ENCODE measurements at regions of chr1 and their contacts with region 1.

Region 1: DNA sequence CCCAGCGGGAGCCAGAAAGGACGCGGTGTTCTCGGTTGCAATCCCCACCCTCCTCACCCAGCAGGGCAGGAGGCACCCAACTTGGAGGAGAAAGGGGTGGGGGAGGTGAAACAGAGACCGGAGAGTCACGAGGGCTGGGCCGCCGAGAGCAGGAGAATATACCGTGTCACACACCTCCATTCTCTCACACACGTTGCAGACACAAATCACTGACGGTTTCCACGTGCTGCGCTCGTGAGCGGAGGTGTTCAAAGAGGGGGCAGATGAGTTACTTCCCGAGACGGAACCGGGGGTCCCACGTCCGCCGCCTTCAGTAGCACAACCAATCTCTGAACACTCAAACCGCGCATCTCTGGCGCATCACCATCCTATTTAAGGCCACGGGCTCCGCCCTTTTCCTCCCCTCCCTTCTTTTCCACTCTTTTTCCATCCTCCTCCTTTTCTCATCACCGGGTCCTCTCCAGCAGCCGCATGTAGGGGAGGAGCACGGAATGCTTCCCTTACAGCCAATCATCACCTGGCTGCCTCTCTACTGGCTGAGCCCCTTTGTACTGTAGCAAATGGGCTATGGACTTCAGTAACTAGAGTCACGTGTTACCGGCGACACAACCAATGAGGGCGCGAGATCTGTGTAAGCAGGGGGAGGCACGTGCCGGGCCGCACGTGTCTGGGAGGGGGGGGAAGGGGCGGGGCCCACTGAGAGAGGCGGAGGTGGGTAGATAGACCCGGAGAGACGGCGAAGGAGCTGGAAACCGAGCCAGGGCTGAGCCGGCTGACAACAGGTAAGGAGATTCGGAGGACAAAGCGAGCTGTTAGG is at the start of gene CIART:
- DNase-seq: peak; percentile 97 to 99
- ATAC-seq: peak; percentile 88 to 91
- H3K4me3 ChIP-seq: peak within 1 kb of the TSS; percentile 59 to 80 (median 72)
- H3K27ac ChIP-seq: peak within 1 kb of the TSS; percentile 93 to 97 (median 95)
- H3K4me1 ChIP-seq: peaks cover 27 to 34% of the 10 kb centered on the region in 2 donors
- H3K27me3 ChIP-seq: no peaks in the 10 kb centered on the region
- CTCF ChIP-seq: no peak
- POLR2A ChIP-seq: peak; percentile 67 to 77
- total RNA-seq, gene CIART: 8.2 to 15.8 (median 11.7) TPM

Region 2: DNA sequence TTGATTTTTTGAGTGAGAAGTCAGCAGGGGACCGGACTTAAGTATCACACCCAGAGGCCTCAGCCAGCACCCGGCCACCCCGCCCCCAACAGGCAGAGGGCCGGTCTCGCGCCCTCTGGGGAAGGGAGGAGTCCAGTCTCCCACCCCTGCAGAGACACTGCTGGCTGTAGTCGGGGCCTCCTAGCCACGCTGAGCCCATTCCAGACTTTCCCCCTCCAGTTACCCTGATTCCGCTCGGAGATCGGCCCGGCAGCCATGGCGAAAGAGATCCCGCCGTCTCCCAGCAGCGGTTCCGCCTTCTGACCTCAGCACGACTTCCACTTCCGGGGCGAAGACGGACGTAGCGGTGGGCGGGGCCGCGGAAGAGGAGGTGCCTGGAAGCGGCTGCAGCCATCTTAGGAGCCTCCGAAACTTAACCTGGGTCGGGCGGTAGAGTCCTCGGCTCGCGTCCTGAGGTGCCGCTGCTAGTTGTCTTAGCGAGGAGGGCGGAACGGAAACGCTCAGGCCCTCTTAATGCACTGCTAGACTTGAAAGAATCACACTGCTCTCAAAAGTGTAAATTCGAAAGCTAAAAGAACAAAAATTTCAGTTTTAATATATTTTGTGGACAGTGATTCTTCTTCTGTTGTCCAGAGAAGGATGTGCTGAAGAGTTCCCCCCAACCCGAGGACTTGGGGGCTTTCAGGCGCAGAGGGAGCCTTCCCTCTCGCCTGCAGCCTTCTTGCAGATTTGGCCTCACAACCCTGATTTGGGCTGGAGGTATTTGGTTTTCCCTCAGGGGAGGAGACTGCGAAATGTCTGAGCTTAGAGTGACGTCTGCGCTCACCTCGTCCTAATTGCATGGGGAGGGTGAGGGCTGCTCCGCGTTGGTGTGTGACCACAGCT is 354.3 kb before region 1 on chr1 and contains the start of gene SF3B4:
- in situ Hi-C with region 1: no loop called
- intact Hi-C with region 1: no loop called
- DNase-seq: peak; percentile 95
- ATAC-seq: peak; percentile 98 to 99
- H3K4me3 ChIP-seq: peak within 1 kb of the TSS; percentile 73 to 98 (median 92)
- H3K27ac ChIP-seq: peak within 1 kb of the TSS; percentile 92 to 98 (median 94)
- H3K4me1 ChIP-seq: peaks cover 29 to 33% of the 10 kb centered on the region in 2 donors
- H3K27me3 ChIP-seq: no peaks in the 10 kb centered on the region
- CTCF ChIP-seq: peak in 3 of 5 experiments; percentile 15 to 39 (median 31)
- POLR2A ChIP-seq: peak; percentile 81 to 89
- total RNA-seq, gene SF3B4: 4.4 to 17.4 (median 8.1) TPM

Region 3: GRCh38 chr1:150213170-150214098 is 68.6 kb before region 1 on chr1:
- in situ Hi-C with region 1: no loop called
- intact Hi-C with region 1: loop called (anchors 1 kb)
- DNase-seq: peak; percentile 93 to 97
- ATAC-seq: peak; percentile 99 to 100
- H3K4me3 ChIP-seq: peak overlapping the region; percentile 59 to 68 (median 67)
- H3K27ac ChIP-seq: peak overlapping the region; percentile 75 to 88 (median 86)
- H3K4me1 ChIP-seq: peaks cover 5 to 10% of the 10 kb centered on the region in 2 donors
- H3K27me3 ChIP-seq: no peaks in the 10 kb centered on the region
- CTCF ChIP-seq: peak in 2 of 5 experiments; percentile 13 to 26
- POLR2A ChIP-seq: peak; percentile 18 to 49

Region 4: GRCh38 chr1:150259758-150260669 is 22.0 kb before region 1 on chr1:
- in situ Hi-C with region 1: no loop called
- intact Hi-C with region 1: loop called (anchors 1 kb)
- DNase-seq: peak in 1 of 2 donors; percentile 24
- ATAC-seq: peak in 1 of 2 donors; percentile 5
- H3K4me3 ChIP-seq: peak overlapping the region in 1 of 4 donors; percentile 5
- H3K27ac ChIP-seq: peak overlapping the region; percentile 22 to 76 (median 66)
- H3K4me1 ChIP-seq: peaks cover 32 to 48% of the 10 kb centered on the region in 2 donors
- H3K27me3 ChIP-seq: no peaks in the 10 kb centered on the region
- CTCF ChIP-seq: no peak
- POLR2A ChIP-seq: no peak

Region 5: DNA sequence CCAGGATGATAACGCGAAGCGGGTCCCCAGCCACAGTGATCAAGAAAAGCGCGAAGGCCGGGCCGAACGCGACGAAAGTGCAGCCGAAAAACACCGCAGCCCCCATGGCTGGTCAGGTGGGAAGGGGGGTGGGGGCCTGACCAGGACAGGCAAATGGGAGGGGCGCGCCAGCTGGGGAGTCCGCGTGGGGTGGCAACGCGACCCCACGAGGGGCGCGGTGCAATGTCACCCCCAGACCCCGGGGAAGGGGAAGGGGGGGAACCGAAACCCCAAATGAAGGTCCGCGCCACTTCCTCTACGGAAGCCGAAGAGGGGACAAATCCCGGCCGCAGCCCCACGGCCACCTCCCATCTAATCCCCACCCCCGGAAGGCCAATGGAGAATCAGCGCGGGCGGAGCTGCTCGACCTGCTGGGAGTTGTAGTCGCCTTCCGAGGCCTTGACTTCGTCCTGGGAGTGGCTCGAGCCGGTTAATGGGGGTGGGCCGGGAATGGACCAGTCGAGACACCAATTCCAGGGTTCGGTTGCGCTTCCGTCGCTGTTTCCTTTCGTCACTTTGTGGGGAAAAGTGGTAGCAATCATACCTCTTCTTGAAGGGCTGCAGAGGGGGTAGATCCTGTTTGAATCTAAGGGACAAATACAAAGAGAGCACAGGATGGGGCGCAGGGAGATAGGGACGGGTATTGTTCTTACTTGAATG is 13.2 kb before region 1 on chr1 and contains the start of gene APH1A:
- in situ Hi-C with region 1: no loop called
- intact Hi-C with region 1: loop called (anchors 1 kb)
- DNase-seq: peak; percentile 97 to 98
- ATAC-seq: peak; percentile 95 to 96
- H3K4me3 ChIP-seq: peak within 1 kb of the TSS; percentile 69 to 99 (median 94)
- H3K27ac ChIP-seq: peak within 1 kb of the TSS; percentile 94 to 99 (median 98)
- H3K4me1 ChIP-seq: peaks cover 10 to 40% of the 10 kb centered on the region in 2 donors
- H3K27me3 ChIP-seq: no peaks in the 10 kb centered on the region
- CTCF ChIP-seq: no peak
- POLR2A ChIP-seq: peak; percentile 76 to 83
- total RNA-seq, gene APH1A: 41.2 to 63.8 (median 54.9) TPM

Region 6: DNA sequence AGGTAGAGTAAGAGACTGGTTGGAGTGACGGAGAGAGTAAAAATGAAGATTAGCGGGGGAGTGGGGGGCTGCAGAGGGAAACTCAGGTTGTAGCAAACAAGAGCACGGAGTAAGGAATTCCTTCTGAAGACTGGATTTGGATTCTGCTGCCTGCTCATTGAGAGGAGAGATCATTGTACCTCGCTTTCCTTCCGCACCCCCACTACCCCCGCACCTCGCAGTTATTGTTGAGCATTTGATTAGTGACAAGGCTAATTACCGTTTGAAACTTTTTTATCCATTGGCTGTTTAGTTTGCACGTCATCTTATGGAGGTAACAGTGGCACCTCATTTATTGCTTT is 39.8 kb after region 1 on chr1:
- in situ Hi-C with region 1: no loop called
- intact Hi-C with region 1: loop called (anchors 1 kb)
- DNase-seq: no peak
- ATAC-seq: no peak
- H3K4me3 ChIP-seq: peak overlapping the region; percentile 58 to 98 (median 74)
- H3K27ac ChIP-seq: peak overlapping the region; percentile 82 to 88 (median 87)
- H3K4me1 ChIP-seq: peaks cover 9 to 10% of the 10 kb centered on the region in 2 donors
- H3K27me3 ChIP-seq: no peaks in the 10 kb centered on the region
- CTCF ChIP-seq: no peak
- POLR2A ChIP-seq: no peak